Left cardiac atrium (tissue), 4 donors: ENCODE measurements at regions of chr19 and their contacts with region 1.

Region 1: GRCh38 chr19:16584248-16585141 is 12.3 kb upstream of the SLC35E1 start:
- DNase-seq: peak; percentile 89
- ATAC-seq: peak; percentile 78 to 88

Region 2: DNA sequence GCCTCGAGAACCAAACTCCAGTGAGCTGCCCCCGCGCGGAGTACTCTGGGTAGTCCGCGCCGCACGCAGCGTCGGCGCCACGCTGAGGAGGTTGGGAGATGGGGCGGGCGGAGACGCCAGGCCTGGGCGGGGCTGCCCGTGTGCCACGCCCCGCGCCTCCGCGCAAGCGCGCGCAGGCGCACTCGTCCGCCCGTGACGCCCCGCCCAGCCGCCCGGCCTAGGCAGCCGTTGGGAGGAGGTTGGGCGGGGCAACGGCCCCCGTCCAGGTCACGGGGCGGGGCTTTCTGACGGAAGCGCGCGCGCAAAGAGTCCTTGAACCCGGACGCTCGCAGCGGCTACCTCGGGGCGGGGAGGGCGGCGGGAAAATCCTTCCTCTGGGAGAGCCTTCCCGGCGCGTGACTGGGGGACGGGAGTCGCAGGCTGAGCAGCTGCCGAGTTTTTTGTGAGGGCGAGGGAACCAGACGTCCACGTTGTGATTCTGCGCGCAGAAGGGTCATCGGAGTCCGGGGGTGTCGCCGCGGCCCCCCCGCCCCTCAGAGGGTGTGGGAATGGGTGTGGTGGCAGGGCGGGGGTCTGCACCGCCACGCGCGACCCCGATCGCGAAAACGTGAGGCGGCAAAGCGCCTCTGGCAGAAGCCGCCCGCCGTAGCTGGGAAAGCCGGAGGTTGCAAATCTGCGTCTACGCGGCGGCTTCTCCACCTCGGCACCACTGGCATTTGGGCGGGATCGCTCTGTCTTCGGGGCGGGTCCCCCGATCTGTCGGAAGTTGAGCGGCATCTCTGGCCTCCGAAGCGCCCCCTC is 43.9 kb after region 1 on chr19 and contains the start of gene MED26:
- intact Hi-C with region 1: loop called in 1 of 2 experiments (anchors 5 kb)
- DNase-seq: peak; percentile 96
- ATAC-seq: peak; percentile 97
- total RNA-seq, gene MED26: 5.0 to 5.6 TPM

Region 3: GRCh38 chr19:17441241-17442021 is 856.9 kb after region 1 on chr19:
- intact Hi-C with region 1: no loop called
- DNase-seq: no peak
- ATAC-seq: peak; percentile 37 to 71